Endothelial cell of umbilical vein (primary cell): ENCODE measurements at regions of chr22 and their contacts with region 1.

Region 1: DNA sequence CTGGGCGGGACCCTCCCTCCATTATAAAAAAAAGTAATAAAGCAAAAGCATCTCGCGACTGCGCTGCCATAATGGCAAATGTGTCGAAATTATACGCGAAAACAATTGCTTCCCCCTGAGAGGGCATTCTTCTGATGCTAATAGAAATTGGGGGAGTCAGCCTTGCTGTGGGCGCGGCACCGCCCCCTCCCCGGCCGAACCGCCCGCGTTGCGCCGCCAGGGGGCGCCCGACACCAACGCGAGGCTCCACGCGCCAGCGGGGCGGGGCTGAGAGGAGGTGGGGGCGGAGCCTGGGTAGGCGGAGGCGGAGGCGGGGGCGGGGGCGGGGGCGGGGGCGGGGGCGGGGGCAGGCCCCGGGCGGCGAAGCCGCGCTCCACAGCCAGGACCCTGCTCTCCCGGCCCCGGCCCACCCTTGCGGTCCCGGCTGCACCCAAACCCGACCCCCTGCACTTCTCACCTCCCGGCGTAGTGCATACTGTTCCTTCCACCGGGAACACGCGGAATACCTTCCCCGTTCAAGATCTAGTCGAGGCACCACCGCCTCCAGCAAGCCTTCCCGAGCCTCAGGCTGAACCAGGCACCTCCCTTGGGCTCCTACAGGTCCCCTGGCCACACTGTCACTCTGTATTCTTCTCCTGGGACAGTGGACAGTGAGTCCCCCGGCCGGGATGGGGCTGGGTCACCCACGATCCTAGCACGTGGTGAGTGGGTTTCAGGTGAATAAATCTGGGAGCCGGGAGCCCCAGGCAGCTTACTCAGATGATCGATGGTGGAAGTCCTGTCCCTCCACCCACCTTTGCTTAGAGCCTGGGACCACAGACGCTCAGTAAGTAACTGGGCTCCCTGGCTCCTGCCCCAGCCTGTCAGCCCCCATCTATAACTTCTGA is 15.5 kb upstream of the UPK3A start:
- DNase-seq: peak; percentile 62
- H3K4me3 ChIP-seq: peak overlapping the region; percentile 44 to 61 (median 57)
- H3K27ac ChIP-seq: no peak overlapping the region
- H3K4me1 ChIP-seq: peaks cover 6% of the 10 kb centered on the region
- H3K27me3 ChIP-seq: peaks cover 4 to 15% of the 10 kb centered on the region in 2 experiments
- CTCF ChIP-seq: peak; percentile 74 to 78
- POLR2A ChIP-seq: no peak

Region 2: DNA sequence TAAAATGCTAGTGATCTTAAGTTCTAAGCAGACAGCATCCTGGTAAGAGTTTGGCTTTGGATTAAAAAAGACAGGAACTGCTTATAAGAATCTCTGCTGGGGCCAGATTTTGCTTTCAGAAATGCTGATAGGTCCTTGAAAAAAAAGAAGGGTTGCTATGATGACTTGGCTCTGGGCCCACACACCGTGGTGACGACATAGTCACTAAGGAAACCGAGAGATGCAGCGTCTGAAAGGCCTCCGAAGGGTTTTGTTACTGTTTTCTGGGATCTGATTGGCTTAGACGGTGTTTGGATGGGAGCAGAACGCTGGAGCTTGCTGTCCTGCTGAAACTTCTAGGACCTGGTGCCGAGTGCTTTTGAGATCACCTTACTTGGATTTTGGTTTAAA is 49.0 kb after region 1 on chr22:
- CTCF ChIA-PET with region 1: interaction called, 4 read pairs
- POLR2A ChIA-PET with region 1: no interaction called
- dilution Hi-C with region 1: no loop called
- intact Hi-C with region 1: loop called (anchors 5 kb)
- DNase-seq: peak; percentile 97
- H3K4me3 ChIP-seq: peak overlapping the region in 1 of 3 experiments; percentile 44
- H3K27ac ChIP-seq: peak overlapping the region; percentile 99
- H3K4me1 ChIP-seq: peaks cover 33% of the 10 kb centered on the region
- H3K27me3 ChIP-seq: no peaks in the 10 kb centered on the region
- CTCF ChIP-seq: no peak
- POLR2A ChIP-seq: no peak

Region 3: GRCh38 chr22:45376703-45377102 is 107.5 kb after region 1 on chr22:
- CTCF ChIA-PET with region 1: no interaction called
- POLR2A ChIA-PET with region 1: no interaction called
- dilution Hi-C with region 1: loop called (anchors 10 kb)
- intact Hi-C with region 1: no loop called
- DNase-seq: peak; percentile 48
- H3K4me3 ChIP-seq: no peak overlapping the region
- H3K27ac ChIP-seq: no peak overlapping the region
- H3K4me1 ChIP-seq: no peaks in the 10 kb centered on the region
- H3K27me3 ChIP-seq: peaks cover 0 to 2% of the 10 kb centered on the region in 2 experiments
- CTCF ChIP-seq: no peak
- POLR2A ChIP-seq: no peak

Region 4: DNA sequence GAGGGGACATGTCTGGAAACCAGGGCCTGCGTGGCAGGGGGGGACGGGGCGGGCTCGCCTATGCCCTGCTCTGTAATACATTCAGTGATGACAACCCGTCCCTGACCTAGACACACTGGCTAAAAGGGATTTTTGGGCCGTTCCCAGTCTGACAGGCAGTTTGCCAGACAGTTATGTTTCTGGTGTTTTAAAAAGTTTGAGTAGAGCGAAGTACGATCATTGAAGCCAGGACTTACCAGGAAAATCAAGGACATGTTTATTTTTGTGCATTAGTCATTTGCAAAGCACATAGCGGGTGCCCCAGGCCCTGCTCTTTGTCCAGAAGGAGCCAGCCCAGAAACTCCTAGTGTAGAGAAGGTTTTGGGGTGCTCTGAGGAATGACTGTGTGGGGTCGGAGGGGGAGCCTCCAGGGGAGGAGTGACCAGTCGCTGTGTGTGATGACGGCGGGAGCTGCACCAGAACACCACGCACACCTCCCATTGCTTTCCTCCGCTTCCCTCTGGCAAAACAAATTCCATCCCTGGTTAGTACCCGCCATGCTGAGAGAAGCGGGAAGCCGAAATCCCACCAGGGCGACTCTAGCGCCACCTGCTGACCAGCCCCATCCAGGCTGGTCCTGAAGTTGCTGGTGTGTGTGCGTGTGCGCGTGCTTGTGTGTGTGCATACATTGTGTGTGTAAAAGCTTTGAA is 284.3 kb after region 1 on chr22:
- CTCF ChIA-PET with region 1: interaction called, 11 read pairs
- POLR2A ChIA-PET with region 1: no interaction called
- dilution Hi-C with region 1: no loop called
- intact Hi-C with region 1: loop called (anchors 1 kb)
- DNase-seq: peak; percentile 71
- H3K4me3 ChIP-seq: no peak overlapping the region
- H3K27ac ChIP-seq: no peak overlapping the region
- H3K4me1 ChIP-seq: no peaks in the 10 kb centered on the region
- H3K27me3 ChIP-seq: no peaks in the 10 kb centered on the region
- CTCF ChIP-seq: peak; percentile 91 to 98
- POLR2A ChIP-seq: no peak